Heart left ventricle (tissue), 16 donors: ENCODE measurements at regions of chr9 and their contacts with region 1.

Region 1: GRCh38 chr9:133149126-133150107 is 14.3 kb downstream of the GBGT1 start:
- DNase-seq: peak; percentile 90 to 94 (median 91)
- ATAC-seq: peak; percentile 63 to 82 (median 79)
- H3K4me3 ChIP-seq: peak overlapping the region in 11 of 12 donors; percentile 46 to 88 (median 76)
- H3K27ac ChIP-seq: peak overlapping the region; percentile 47 to 92 (median 86)
- H3K4me1 ChIP-seq: peaks cover 0 to 42% (median 29%) of the 10 kb centered on the region in 12 donors
- H3K27me3 ChIP-seq: no peaks in the 10 kb centered on the region
- CTCF ChIP-seq: peak in 8 of 12 donors; percentile 10 to 52 (median 29)
- POLR2A ChIP-seq: peak in 1 of 2 donors; percentile 58

Region 2: DNA sequence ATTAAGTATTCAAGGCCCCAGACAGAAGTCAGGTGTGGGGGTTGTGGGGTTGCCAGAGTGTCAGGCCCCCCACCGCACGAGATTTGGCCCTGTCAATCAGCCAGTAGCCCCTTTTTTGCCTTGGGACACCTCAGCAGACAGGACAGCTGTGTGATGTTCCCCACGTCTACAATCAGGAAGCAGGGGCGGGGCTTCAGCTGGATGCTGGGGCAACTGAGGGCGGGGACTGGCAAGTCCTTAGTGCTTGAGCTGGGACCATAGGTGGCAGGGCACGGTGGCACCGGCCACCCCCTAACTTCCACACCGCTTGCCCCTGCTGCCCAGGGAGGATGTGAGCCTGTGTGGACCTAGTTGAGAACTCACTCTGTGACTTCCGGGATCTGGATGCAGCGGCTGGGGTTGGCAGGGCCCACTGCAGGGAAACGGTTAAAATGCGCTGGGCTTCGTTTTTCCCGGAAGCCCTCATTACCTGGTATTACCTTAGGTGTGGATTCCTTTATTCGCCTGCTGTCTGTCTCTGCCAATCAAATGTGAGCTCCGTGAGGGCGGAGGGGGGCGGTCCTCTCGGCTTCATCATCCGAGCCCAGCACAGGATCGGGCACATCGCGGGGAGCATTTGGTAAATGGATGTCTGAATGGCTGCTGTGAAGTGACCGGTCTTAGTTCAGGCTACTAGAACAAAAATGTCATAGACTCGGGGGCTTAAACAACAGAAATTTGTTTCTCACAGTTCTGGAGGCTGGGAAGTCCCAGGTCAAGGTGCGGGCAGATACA is 126.1 kb before region 1 on chr9:
- intact Hi-C with region 1: loop called in 2 of 10 experiments (anchors 2 to 5 kb)
- DNase-seq: no peak
- ATAC-seq: peak in 2 of 4 donors; percentile 13 to 23
- H3K4me3 ChIP-seq: no peak overlapping the region
- H3K27ac ChIP-seq: no peak overlapping the region
- H3K4me1 ChIP-seq: peaks cover 0 to 6% (median under 1%) of the 10 kb centered on the region in 12 donors
- H3K27me3 ChIP-seq: no peaks in the 10 kb centered on the region
- CTCF ChIP-seq: no peak
- POLR2A ChIP-seq: no peak

Region 3: DNA sequence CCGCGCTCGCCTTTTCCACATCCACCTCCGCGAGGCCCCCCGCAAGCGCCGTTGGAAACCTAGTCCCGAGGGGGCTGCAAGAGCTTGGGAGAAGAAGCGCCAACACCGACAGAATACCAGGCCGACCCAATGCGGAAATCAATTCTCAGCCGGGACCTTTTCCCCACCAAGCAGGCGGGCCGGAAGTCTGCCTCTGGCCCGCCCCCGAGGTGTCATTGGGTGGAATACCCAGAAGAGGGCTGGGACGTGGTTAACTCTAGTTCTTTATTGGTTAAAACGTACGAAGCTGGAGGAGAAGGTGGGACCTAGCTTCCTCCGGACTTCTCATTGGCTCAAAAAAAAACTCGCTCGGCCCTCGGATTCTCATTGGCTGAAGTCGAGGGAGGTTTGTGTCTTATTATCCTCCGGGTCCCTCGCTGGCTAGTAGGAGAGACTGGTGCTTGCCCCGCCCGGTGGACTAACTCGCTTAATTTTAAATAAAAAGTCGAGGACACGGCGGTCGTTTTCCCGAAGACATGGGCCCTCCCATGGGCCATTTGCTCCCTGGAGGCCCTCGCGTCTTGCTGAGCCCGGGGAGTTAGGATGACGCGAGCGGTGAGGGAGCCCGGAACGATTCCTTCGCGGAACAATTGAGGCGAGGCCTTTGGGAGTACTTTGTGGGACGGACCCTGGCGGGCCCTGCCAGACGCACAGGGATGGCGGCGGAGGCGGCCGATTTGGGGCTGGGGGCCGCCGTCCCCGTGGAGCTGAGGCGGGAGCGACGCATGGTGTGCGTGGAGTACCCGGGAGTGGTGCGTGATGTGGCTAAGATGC is 118.9 kb before region 1 on chr9 and contains the start of gene GTF3C5:
- intact Hi-C with region 1: loop called in 2 of 10 experiments (anchors 5 kb)
- DNase-seq: peak; percentile 93 to 95 (median 94)
- ATAC-seq: peak; percentile 98 to 99 (median 99)
- H3K4me3 ChIP-seq: peak within 1 kb of the TSS; percentile 69 to 99 (median 92)
- H3K27ac ChIP-seq: peak within 1 kb of the TSS; percentile 81 to 96 (median 90)
- H3K4me1 ChIP-seq: peaks cover 8 to 37% (median 23%) of the 10 kb centered on the region in 12 donors
- H3K27me3 ChIP-seq: no peaks in the 10 kb centered on the region
- CTCF ChIP-seq: peak in 2 of 12 donors; percentile 5 to 21
- POLR2A ChIP-seq: peak in 1 of 2 donors; percentile 52
- total RNA-seq, gene GTF3C5: 22.9 to 45.8 (median 34.5) TPM

Region 4: GRCh38 chr9:133048569-133048968 is 100.8 kb before region 1 on chr9:
- intact Hi-C with region 1: loop called in 8 of 10 experiments (anchors 2 to 10 kb)
- DNase-seq: no peak
- ATAC-seq: peak in 3 of 4 donors; percentile 25 to 54 (median 48)
- H3K4me3 ChIP-seq: no peak overlapping the region
- H3K27ac ChIP-seq: no peak overlapping the region
- H3K4me1 ChIP-seq: peaks cover 0 to 3% (median 0%) of the 10 kb centered on the region in 12 donors
- H3K27me3 ChIP-seq: no peaks in the 10 kb centered on the region
- CTCF ChIP-seq: peak in 10 of 12 donors; percentile 22 to 49 (median 36)
- POLR2A ChIP-seq: no peak

Region 5: GRCh38 chr9:133054966-133055365 is 94.5 kb before region 1 on chr9:
- intact Hi-C with region 1: loop called in 3 of 10 experiments (anchors 5 kb)
- DNase-seq: peak; percentile 79 to 93 (median 84)
- ATAC-seq: peak; percentile 88 to 94 (median 92)
- H3K4me3 ChIP-seq: no peak overlapping the region
- H3K27ac ChIP-seq: peak overlapping the region; percentile 46 to 95 (median 88)
- H3K4me1 ChIP-seq: peaks cover 0 to 38% (median 18%) of the 10 kb centered on the region in 12 donors
- H3K27me3 ChIP-seq: no peaks in the 10 kb centered on the region
- CTCF ChIP-seq: no peak
- POLR2A ChIP-seq: no peak

Region 6: GRCh38 chr9:133103183-133103986 is 46.0 kb before region 1 on chr9:
- intact Hi-C with region 1: loop called in 9 of 10 experiments (anchors 1 to 2 kb)
- DNase-seq: peak; percentile 62 to 87 (median 66)
- ATAC-seq: peak; percentile 35 to 78 (median 68)
- H3K4me3 ChIP-seq: no peak overlapping the region
- H3K27ac ChIP-seq: peak overlapping the region in 1 of 12 donors; percentile 33
- H3K4me1 ChIP-seq: peaks cover 0 to 3% (median 0%) of the 10 kb centered on the region in 12 donors
- H3K27me3 ChIP-seq: no peaks in the 10 kb centered on the region
- CTCF ChIP-seq: peak; percentile 87 to 100 (median 98)
- POLR2A ChIP-seq: no peak